Natural killer cell (primary cell): ENCODE measurements at regions of chr19 and their contacts with region 1.

Region 1: GRCh38 chr19:48588670-48589399 is 17.7 kb upstream of the SPACA4 start:
- DNase-seq: peak; percentile 87 to 93
- ATAC-seq: peak; percentile 92 to 94 (median 94)
- H3K4me3 ChIP-seq: peak overlapping the region; percentile 8
- H3K4me3 Mint-ChIP-seq: peak overlapping the region; percentile 49
- H3K27ac ChIP-seq: no peak overlapping the region
- H3K27ac Mint-ChIP-seq: peak overlapping the region in 1 of 2 donors; percentile 87
- H3K4me1 ChIP-seq: peaks cover 15% of the 10 kb centered on the region
- H3K4me1 Mint-ChIP-seq: peaks cover 14 to 17% of the 10 kb centered on the region in 2 donors
- H3K27me3 ChIP-seq: no peaks in the 10 kb centered on the region
- H3K27me3 Mint-ChIP-seq: peaks cover 7 to 8% of the 10 kb centered on the region in 2 donors
- CTCF ChIP-seq: peak; percentile 81

Region 2: GRCh38 chr19:48271531-48272151 is 317.2 kb before region 1 on chr19:
- intact Hi-C with region 1: loop called (anchors 1 kb)
- DNase-seq: peak in 1 of 2 donors; percentile 26
- ATAC-seq: peak; percentile 38 to 55 (median 41)
- H3K4me3 ChIP-seq: peak overlapping the region; percentile 42
- H3K4me3 Mint-ChIP-seq: peak overlapping the region; percentile 83
- H3K27ac ChIP-seq: no peak overlapping the region
- H3K27ac Mint-ChIP-seq: peak overlapping the region in 1 of 2 donors; percentile 70
- H3K4me1 ChIP-seq: peaks cover 16% of the 10 kb centered on the region
- H3K4me1 Mint-ChIP-seq: peaks cover 12 to 24% of the 10 kb centered on the region in 2 donors
- H3K27me3 ChIP-seq: no peaks in the 10 kb centered on the region
- H3K27me3 Mint-ChIP-seq: peaks cover 0 to 8% of the 10 kb centered on the region in 2 donors
- CTCF ChIP-seq: no peak

Region 3: DNA sequence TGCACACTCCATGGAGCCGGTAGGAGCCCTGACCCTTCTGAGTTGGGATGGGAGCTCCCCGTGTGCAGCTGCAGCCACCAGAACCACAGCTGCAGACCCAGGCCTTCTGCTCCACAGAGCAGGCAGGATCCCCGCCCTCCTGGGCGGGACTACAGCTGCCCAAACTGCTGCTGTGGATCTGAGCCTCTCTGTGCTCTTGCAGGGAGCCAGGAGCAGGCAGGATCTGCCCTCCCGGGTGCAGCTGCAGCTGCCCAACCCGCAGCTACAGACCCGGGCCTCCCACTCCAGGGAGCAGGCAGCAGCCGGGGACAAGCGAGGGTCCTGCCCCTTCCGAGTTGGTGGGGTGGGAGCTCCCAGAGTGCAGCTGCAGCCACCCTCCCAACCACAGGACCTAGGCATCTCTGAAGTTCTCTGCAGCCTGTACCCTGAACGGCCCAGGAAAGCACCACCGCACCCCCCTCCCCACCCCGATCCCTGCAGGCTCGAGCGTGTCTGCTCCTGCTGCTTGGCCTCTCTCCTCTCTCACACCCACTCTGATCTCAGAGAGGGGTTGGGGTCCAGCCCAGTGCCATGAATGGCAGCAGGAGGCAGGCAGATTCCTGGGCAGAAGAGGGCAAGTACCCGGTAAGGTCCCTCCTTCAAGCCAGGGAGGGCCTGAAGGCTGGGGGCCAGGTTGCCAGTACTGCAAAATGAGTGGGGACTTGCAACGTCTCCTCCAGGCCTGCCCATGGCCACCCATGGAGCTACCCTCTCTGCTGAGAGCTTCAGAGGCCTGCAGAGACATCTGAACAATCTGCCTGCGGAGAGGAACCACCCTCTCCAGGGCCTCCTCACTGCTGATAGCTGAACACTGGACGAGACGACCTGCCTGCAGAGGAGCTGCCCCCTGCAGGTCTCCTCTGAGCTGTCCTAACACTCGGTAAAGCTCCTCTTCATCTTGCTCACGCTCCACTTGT is 279.9 kb before region 1 on chr19:
- intact Hi-C with region 1: loop called (anchors 1 kb)
- DNase-seq: no peak
- ATAC-seq: no peak
- H3K4me3 ChIP-seq: no peak overlapping the region
- H3K4me3 Mint-ChIP-seq: no peak overlapping the region
- H3K27ac ChIP-seq: no peak overlapping the region
- H3K27ac Mint-ChIP-seq: no peak overlapping the region
- H3K4me1 ChIP-seq: no peaks in the 10 kb centered on the region
- H3K4me1 Mint-ChIP-seq: no peaks in the 10 kb centered on the region
- H3K27me3 ChIP-seq: no peaks in the 10 kb centered on the region
- H3K27me3 Mint-ChIP-seq: no peaks in the 10 kb centered on the region
- CTCF ChIP-seq: no peak

Region 4: DNA sequence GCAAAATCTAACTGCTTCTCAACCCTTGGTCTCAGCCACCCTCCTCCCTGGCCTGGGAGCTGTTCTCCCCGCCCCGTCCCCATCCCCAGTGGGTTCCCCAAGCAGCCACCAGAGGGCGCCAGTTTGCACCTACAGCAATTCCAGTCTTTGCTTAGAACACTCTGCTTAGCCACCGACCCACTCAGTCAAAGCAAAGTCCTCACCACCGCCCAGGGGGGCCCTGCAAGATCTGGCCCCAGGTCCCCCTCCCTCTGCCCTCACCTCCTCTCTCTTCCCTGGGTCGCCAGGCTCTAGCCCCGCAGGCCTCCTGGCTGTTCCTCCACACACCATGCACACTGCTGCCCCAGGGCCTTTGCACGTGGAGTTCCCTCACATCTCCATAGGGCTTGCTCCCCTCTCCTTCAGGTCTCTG is 237.5 kb before region 1 on chr19:
- intact Hi-C with region 1: loop called (anchors 1 kb)
- DNase-seq: peak; percentile 70 to 85
- ATAC-seq: peak; percentile 79 to 96 (median 90)
- H3K4me3 ChIP-seq: no peak overlapping the region
- H3K4me3 Mint-ChIP-seq: no peak overlapping the region
- H3K27ac ChIP-seq: no peak overlapping the region
- H3K27ac Mint-ChIP-seq: peak overlapping the region in 1 of 2 donors; percentile 16
- H3K4me1 ChIP-seq: peaks cover 3% of the 10 kb centered on the region
- H3K4me1 Mint-ChIP-seq: peaks cover 0 to 9% of the 10 kb centered on the region in 2 donors
- H3K27me3 ChIP-seq: no peaks in the 10 kb centered on the region
- H3K27me3 Mint-ChIP-seq: no peaks in the 10 kb centered on the region
- CTCF ChIP-seq: peak; percentile 71

Region 5: DNA sequence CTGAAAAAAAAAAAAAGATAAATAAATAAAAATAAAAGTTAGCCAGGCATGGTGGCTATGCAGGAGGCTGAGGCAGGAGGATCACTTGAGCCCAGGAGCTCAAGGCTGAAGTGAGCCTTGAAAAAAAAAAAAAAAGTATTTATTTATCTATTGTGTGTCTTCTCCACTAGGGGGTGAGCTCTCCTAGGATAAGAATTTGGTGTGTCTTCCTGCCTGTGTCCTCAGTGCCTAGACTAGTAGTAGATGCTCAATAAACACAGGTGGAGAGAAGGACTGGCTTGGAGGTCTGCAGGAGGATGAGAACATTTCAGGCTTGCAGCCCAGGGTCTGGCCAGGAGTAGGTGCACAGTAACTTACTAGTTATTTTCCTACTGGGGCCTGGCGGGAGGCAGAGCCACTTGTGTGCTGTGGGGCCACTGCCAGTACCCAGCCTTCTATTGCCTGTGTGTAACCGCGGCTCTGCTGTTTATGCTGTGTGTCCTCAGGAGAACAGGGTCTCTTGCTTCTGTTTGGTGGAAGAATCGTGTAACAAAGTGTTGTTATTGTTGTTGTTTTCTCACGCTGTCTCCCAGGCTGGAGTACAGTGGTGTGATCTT is 82.6 kb before region 1 on chr19:
- intact Hi-C with region 1: loop called (anchors 1 kb)
- DNase-seq: peak in 1 of 2 donors; percentile 74
- ATAC-seq: peak in 2 of 3 donors; percentile 32 to 37
- H3K4me3 ChIP-seq: no peak overlapping the region
- H3K4me3 Mint-ChIP-seq: no peak overlapping the region
- H3K27ac ChIP-seq: no peak overlapping the region
- H3K27ac Mint-ChIP-seq: no peak overlapping the region
- H3K4me1 ChIP-seq: peaks cover 24% of the 10 kb centered on the region
- H3K4me1 Mint-ChIP-seq: peaks cover 6 to 20% of the 10 kb centered on the region in 2 donors
- H3K27me3 ChIP-seq: peaks cover 7% of the 10 kb centered on the region
- H3K27me3 Mint-ChIP-seq: peaks cover 0 to 8% of the 10 kb centered on the region in 2 donors
- CTCF ChIP-seq: peak; percentile 54